ENCODE measurements at regions of chr6 and their contacts with region 1.

Region 1: DNA sequence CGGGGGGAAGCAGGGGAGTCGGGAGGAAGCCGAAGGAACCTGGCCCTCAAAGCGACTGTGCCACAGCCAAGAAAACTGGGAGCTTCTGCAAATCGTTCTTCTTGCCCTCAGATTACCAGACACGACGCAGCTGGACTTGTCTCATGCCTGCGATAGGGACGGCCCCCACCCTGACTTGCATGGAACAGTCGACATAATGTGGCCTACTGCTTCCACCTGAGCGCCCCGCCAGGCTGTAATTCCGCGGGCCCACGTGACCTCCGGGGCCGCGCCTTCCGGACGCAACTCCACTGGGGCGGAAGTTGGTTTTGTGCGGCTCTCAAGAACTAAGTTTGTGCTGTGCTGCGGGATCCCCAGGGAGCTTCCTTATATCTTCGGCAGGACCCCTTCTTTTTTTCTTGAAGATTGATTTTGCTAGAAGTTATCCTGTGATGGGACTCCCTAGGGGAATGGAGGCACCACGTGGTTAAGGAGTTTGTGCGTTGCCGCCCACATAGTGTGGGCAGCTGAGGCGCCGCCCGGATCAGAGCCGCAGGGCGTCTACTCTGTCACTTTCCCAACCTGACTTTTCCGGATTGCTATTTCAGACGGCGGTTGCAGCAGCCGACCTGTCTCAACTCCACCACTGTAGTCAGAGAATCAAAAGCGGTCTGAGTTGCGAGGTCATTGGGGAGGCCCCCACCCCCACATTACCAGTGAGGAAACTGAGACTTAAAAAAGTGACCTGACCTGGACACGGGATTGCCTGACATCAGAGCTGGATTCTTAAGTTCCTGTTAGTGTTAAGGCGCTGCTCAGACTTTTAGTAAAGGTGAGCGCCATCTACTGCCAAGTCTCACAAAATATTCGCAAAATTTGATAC is 540 bp upstream of the CD164 start:
- DNase-seq: peak; percentile 90 to 97 (median 96)
- ATAC-seq: peak; percentile 82
- H3K4me3 ChIP-seq: peak overlapping the region; percentile 89
- H3K4me3 Mint-ChIP-seq: peak overlapping the region; percentile 88 to 99 (median 98)
- H3K27ac ChIP-seq: peak overlapping the region; percentile 95
- H3K27ac Mint-ChIP-seq: peak overlapping the region; percentile 92 to 100 (median 99)
- H3K4me1 ChIP-seq: peaks cover 22 to 32% of the 10 kb centered on the region in 2 donors
- H3K4me1 Mint-ChIP-seq: peaks cover 34 to 58% (median 51%) of the 10 kb centered on the region in 7 donors
- H3K27me3 ChIP-seq: no peaks in the 10 kb centered on the region
- H3K27me3 Mint-ChIP-seq: peaks cover 0 to 7% (median 0%) of the 10 kb centered on the region in 5 donors

Region 2: DNA sequence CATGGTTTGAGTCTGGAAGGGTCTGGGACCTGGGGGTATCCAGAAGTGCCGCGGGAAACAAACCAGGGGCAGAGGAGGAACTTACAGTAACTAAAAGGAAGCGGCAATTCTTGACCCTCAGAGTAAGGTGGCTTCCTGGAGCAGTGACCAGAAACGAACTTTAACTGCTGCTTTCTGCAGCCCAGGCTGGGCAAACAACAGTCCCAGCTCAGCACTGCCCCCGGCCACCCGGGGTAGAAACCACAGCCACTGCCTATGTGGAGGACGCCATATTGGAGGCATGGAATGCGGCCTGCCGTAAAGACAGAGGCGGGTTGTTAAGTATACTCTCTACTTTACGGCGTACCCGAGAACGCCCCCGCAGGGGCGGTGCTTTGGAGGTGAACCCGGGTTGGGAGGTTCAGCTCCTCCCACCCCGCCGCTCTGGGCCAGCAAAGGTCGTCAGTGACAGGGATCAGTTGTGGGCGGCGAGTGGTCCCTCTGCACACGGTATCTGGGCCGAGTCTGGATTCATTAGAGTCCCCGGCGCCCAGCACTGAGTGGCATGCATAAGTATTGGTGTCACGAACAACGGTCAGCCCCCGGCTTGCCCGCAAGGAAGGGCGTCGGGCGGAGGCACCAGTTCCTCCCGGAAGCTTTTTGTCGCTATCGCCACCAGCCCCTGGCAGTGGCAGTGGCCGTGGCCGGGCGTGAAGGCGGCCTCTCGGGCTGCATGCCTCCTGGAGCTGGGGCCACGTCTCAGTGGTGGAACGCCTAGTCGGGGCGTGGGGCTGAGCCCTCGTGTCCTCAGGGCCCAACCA is 1923.3 kb before region 1 on chr6 and contains the start of gene PDSS2:
- CTCF ChIA-PET with region 1: interaction called, 3 read pairs
- POLR2A ChIA-PET with region 1: no interaction called
- intact Hi-C with region 1: loop called in 1 of 2 experiments (anchors 1 kb)
- DNase-seq: peak; percentile 83 to 98 (median 95)
- ATAC-seq: peak; percentile 100
- H3K4me3 ChIP-seq: peak within 1 kb of the TSS; percentile 95
- H3K4me3 Mint-ChIP-seq: peak within 1 kb of the TSS; percentile 87 to 99 (median 96)
- H3K27ac ChIP-seq: peak within 1 kb of the TSS; percentile 75
- H3K27ac Mint-ChIP-seq: peak within 1 kb of the TSS; percentile 92 to 99 (median 96)
- H3K4me1 ChIP-seq: peaks cover 5% of the 10 kb centered on the region in 2 donors
- H3K4me1 Mint-ChIP-seq: peaks cover 10 to 41% (median 36%) of the 10 kb centered on the region in 7 donors
- H3K27me3 ChIP-seq: no peaks in the 10 kb centered on the region
- H3K27me3 Mint-ChIP-seq: peaks cover 0 to 7% (median 0%) of the 10 kb centered on the region in 5 donors
- total RNA-seq, gene PDSS2: 12.0 to 15.3 (median 12.1) TPM

Region 3: GRCh38 chr6:108260809-108261569 is 1121.8 kb before region 1 on chr6 and contains the start of gene SNX3:
- CTCF ChIA-PET with region 1: no interaction called
- POLR2A ChIA-PET with region 1: interaction called, 4 read pairs
- intact Hi-C with region 1: loop called (anchors 1 to 2 kb)
- DNase-seq: peak; percentile 81 to 92 (median 91)
- ATAC-seq: peak; percentile 92
- H3K4me3 ChIP-seq: peak within 1 kb of the TSS; percentile 76
- H3K4me3 Mint-ChIP-seq: peak within 1 kb of the TSS; percentile 78 to 97 (median 91)
- H3K27ac ChIP-seq: peak within 1 kb of the TSS; percentile 96
- H3K27ac Mint-ChIP-seq: peak within 1 kb of the TSS; percentile 85 to 98 (median 96)
- H3K4me1 ChIP-seq: peaks cover 0 to 8% of the 10 kb centered on the region in 2 donors
- H3K4me1 Mint-ChIP-seq: peaks cover 16 to 40% (median 26%) of the 10 kb centered on the region in 7 donors
- H3K27me3 ChIP-seq: no peaks in the 10 kb centered on the region
- H3K27me3 Mint-ChIP-seq: peaks cover 0 to 14% (median 0%) of the 10 kb centered on the region in 5 donors
- total RNA-seq, gene SNX3: 42.5 to 87.4 (median 65.8) TPM

Region 4: DNA sequence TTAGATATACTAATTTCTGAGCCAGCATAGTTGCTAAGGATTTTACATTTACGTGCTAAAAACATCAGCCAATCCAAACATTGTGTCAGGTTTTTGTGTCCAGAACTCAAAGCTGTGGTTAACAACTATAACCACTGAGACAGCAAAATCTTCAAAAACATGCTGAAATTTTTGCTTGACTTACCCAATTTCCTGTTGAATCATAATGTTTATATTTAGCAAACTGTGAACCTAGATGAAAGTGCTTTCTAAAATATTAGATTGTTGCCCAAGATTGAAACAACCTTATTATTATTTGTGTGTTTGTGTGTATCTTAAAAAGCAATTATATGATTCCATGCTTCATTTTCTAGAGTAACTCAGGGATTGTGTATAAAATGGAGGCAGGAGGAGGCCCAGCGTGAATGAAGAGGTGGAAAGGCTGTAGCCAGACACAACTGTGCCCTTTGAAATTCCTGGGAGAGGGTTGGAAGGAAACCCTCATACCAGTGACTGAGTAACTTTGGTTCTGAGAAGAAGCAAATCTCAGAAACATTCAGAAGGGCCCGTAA is 486.6 kb before region 1 on chr6:
- CTCF ChIA-PET with region 1: no interaction called
- POLR2A ChIA-PET with region 1: no interaction called
- intact Hi-C with region 1: loop called in 1 of 2 experiments (anchors 5 kb)
- DNase-seq: no peak
- ATAC-seq: peak; percentile 83
- H3K4me3 ChIP-seq: no peak overlapping the region
- H3K4me3 Mint-ChIP-seq: peak overlapping the region in 2 of 10 donors; percentile 48 to 76
- H3K27ac ChIP-seq: no peak overlapping the region
- H3K27ac Mint-ChIP-seq: peak overlapping the region in 2 of 9 donors; percentile 16 to 88
- H3K4me1 ChIP-seq: peaks cover 0 to 44% of the 10 kb centered on the region in 2 donors
- H3K4me1 Mint-ChIP-seq: peaks cover 11 to 37% (median 16%) of the 10 kb centered on the region in 7 donors
- H3K27me3 ChIP-seq: no peaks in the 10 kb centered on the region
- H3K27me3 Mint-ChIP-seq: peaks cover 0 to 20% (median 0%) of the 10 kb centered on the region in 5 donors

Region 5: DNA sequence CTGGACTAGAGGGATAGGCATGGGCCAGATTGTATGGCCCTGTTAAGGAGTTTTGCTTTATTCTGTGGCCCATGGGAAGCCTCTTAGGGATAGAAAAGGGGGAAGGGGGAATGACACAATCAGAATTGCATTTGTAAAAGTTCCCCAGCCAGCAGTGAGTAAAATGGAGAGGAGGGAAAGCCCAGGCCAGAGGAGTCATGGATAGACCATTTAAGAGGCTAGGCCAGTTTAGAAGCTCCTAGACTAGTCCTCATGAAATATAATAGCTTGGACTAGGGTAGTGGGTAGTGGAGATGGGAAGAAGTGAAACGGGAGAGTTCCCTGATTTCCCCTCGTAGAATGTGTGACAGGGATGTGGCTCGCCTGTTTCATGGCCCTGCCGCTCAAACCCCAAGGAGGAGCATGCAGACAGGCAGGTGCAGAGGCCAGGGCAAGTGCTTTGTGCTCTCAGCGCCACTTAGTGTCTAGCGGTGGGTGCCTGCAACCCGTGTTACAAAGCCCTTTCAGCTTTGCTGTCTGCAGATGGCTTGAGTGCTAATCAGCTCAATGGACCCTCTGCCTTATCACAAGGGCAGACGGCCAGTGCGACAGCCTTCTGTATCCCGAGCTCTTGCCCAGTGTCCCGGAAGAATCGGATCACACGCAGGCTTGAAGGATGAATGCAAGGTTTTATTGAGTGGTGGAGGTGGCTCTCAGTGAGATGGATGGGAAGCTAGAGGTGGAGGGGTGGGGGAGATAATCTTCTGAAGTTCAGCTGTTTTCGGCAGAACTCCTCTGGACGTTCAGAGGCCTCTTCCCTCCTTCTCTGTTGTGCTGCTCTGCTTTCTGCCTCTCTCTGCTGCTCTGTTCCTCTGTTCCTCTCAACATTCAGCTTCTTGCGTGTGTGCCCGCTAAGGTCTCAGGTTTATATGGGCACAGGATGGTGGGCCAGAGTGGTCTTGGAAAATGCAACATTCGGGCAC is 146.4 kb before region 1 on chr6:
- CTCF ChIA-PET with region 1: no interaction called
- POLR2A ChIA-PET with region 1: interaction called, 3 read pairs
- intact Hi-C with region 1: loop called (anchors 1 to 2 kb)
- DNase-seq: peak in 3 of 9 donors; percentile 12 to 34 (median 32)
- ATAC-seq: peak; percentile 56
- H3K4me3 ChIP-seq: no peak overlapping the region
- H3K4me3 Mint-ChIP-seq: peak overlapping the region; percentile 0 to 73 (median 26)
- H3K27ac ChIP-seq: no peak overlapping the region
- H3K27ac Mint-ChIP-seq: peak overlapping the region in 8 of 9 donors; percentile 2 to 90 (median 42)
- H3K4me1 ChIP-seq: no peaks in the 10 kb centered on the region
- H3K4me1 Mint-ChIP-seq: peaks cover 6 to 25% (median 18%) of the 10 kb centered on the region in 7 donors
- H3K27me3 ChIP-seq: no peaks in the 10 kb centered on the region
- H3K27me3 Mint-ChIP-seq: peaks cover 0 to 3% (median 0%) of the 10 kb centered on the region in 5 donors

Region 6: DNA sequence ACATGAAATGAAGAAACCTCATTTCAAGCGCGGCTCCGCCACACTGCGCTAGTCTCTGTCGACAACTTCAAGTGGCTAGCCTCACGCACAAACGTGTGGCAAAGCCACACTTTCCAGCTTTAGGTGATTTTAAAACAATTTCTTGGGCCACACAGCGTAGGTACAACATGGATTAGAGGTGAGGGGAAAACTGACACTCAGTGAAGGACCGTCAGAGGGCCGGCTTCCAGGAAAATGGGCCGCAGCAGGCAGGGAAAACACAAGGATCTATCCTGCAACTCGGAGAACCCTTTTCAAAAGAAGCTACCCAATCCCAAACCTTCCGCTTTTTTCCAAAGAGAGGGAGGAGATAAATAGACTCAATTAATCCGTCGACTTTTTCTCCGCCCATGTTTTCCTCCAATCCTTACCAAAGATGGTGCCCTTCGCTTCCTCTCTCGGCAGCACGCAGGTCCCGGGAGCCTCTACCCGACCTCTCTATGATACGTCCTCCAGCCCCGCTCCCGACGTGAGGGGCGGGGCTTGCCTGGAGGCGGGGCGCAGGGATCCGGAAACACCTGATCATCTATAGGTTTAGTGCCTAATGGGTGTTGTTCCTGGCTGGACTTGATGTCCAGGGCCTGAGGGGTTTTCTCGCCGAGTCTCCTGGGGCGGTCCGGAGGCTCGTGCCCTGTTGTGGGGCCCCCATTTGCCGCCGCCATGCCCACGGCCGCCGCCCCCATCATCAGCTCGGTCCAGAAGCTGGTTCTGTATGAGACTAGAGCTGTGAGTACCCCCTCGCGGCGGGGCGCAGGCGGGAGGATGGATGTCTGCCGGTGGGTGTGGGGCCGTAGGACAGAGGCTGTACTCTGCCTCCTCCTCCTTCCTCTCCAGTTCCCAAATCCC is 308.2 kb after region 1 on chr6 and contains the starts of genes AK9 and FIG4:
- CTCF ChIA-PET with region 1: no interaction called
- POLR2A ChIA-PET with region 1: interaction called, 19 read pairs
- intact Hi-C with region 1: loop called (anchors 1 kb)
- DNase-seq: peak; percentile 72 to 88 (median 83)
- ATAC-seq: peak; percentile 98
- H3K4me3 ChIP-seq: peak within 1 kb of the TSS; percentile 98
- H3K4me3 Mint-ChIP-seq: peak within 1 kb of the TSS; percentile 91 to 100 (median 96)
- H3K27ac ChIP-seq: peak within 1 kb of the TSS; percentile 74
- H3K27ac Mint-ChIP-seq: peak within 1 kb of the TSS; percentile 92 to 99 (median 96)
- H3K4me1 ChIP-seq: peaks cover 12 to 13% of the 10 kb centered on the region in 2 donors
- H3K4me1 Mint-ChIP-seq: peaks cover 21 to 48% (median 34%) of the 10 kb centered on the region in 7 donors
- H3K27me3 ChIP-seq: no peaks in the 10 kb centered on the region
- H3K27me3 Mint-ChIP-seq: peaks cover 0 to 13% (median 0%) of the 10 kb centered on the region in 5 donors
- total RNA-seq, gene AK9: 5.8 to 19.5 (median 11.5) TPM
- total RNA-seq, gene FIG4: 6.8 to 16.5 (median 13.0) TPM

Region 7: GRCh38 chr6:110873981-110874879 is 1491.4 kb after region 1 on chr6 and contains the start of gene AMD1:
- CTCF ChIA-PET with region 1: no interaction called
- POLR2A ChIA-PET with region 1: interaction called, 7 read pairs
- intact Hi-C with region 1: loop called (anchors 2 to 5 kb)
- DNase-seq: peak; percentile 87 to 97 (median 96)
- ATAC-seq: peak; percentile 85
- H3K4me3 ChIP-seq: peak within 1 kb of the TSS; percentile 99
- H3K4me3 Mint-ChIP-seq: peak within 1 kb of the TSS in 9 of 10 donors; percentile 94 to 99 (median 99)
- H3K27ac ChIP-seq: peak within 1 kb of the TSS; percentile 73
- H3K27ac Mint-ChIP-seq: peak within 1 kb of the TSS in 8 of 9 donors; percentile 96 to 100 (median 99)
- H3K4me1 ChIP-seq: peaks cover 26 to 28% of the 10 kb centered on the region in 2 donors
- H3K4me1 Mint-ChIP-seq: peaks cover 19 to 28% (median 27%) of the 10 kb centered on the region in 7 donors
- H3K27me3 ChIP-seq: no peaks in the 10 kb centered on the region
- H3K27me3 Mint-ChIP-seq: no peaks in the 10 kb centered on the region
- total RNA-seq, gene AMD1: 61.1 to 105 (median 73.8) TPM

Measured in naive thymus-derived CD4-positive, alpha-beta T cell (primary cell).